Activated B cell treated with CpG ODN at 0.5 μM for 24 hours (primary cell): ENCODE measurements at regions of chr15 and their contacts with region 1.

Region 1: DNA sequence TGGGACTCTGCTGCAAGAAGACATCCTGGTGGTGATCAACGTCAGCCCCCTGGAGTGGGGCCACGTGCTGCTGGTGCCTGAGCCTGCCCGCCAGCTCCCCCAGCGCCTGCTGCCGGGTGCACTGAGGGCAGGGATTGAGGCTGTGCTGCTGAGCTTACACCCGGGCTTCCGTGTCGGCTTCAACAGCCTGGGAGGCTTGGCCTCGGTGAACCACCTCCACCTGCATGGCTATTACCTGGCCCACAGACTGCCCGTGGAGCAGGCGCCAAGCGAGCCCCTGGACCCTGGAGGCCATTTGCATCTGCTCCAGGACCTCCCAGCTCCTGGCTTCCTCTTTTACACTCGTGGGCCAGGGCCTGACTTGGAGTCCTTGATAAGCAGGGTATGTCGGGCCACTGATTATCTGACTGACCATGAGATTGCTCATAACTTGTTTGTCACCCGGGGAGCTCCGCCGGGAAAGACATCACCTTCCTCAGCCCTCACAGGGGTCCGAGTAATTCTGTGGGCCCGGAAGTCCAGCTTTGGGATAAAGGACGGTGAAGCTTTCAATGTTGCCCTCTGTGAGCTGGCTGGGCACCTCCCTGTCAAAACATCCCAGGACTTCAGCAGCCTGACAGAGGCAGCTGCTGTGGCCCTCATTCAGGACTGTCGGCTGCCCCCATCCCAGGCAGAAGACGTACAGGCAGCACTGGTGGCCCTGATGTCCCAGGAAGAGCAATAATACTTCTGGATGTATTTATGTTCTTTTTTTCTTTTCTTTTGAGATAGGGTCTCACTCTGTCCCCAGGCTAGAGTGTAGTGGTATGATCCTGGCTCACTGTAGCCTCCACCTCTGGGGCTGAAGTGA is 7.6 kb downstream of the GDPGP1 start:
- DNase-seq: no peak
- ATAC-seq: no peak
- H3K4me3 Mint-ChIP-seq: no peak overlapping the region
- H3K27ac Mint-ChIP-seq: no peak overlapping the region
- H3K4me1 Mint-ChIP-seq: peaks cover 3% of the 10 kb centered on the region
- H3K27me3 Mint-ChIP-seq: no peaks in the 10 kb centered on the region
- CTCF ChIP-seq: no peak

Region 2: DNA sequence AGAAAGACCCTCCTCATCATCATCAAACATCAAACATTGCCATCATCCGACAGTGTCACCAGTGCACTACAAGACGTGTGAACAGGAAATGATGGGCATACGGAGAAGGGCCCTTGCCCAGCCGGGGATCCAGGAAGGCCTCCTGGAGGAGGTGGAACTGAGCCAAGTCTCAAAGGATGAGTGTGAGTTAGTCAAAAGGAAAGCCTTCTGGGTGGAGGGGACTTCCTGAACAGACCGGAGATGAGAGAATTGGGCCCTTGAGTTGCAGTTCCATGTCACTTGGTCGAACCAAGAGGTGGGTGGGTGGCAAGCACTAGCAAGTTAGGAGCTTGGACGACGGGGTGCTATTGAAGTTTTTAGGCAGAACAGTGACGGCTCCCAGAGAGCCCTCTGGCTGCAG is 32.0 kb before region 1 on chr15:
- CTCF ChIA-PET with region 1: no interaction called
- POLR2A ChIA-PET with region 1: interaction called, 11 read pairs
- intact Hi-C with region 1: no loop called
- DNase-seq: no peak
- ATAC-seq: peak; percentile 28
- H3K4me3 Mint-ChIP-seq: peak overlapping the region; percentile 65
- H3K27ac Mint-ChIP-seq: peak overlapping the region; percentile 95
- H3K4me1 Mint-ChIP-seq: peaks cover 98% of the 10 kb centered on the region
- H3K27me3 Mint-ChIP-seq: no peaks in the 10 kb centered on the region
- CTCF ChIP-seq: no peak

Region 3: GRCh38 chr15:90471769-90472168 is 230.2 kb after region 1 on chr15:
- CTCF ChIA-PET with region 1: no interaction called
- POLR2A ChIA-PET with region 1: no interaction called
- intact Hi-C with region 1: no loop called
- DNase-seq: no peak
- ATAC-seq: no peak
- H3K4me3 Mint-ChIP-seq: no peak overlapping the region
- H3K27ac Mint-ChIP-seq: no peak overlapping the region
- H3K4me1 Mint-ChIP-seq: peaks cover 3% of the 10 kb centered on the region
- H3K27me3 Mint-ChIP-seq: no peaks in the 10 kb centered on the region
- CTCF ChIP-seq: no peak